ENCODE measurements at regions of chr13 and their contacts with region 1.

Region 1: GRCh38 chr13:112968908-112969691 is at the start of gene MCF2L:
- DNase-seq: peak; percentile 33 to 80 (median 78)
- ATAC-seq: peak; percentile 83
- H3K4me3 ChIP-seq: peak within 1 kb of the TSS; percentile 73
- H3K4me3 Mint-ChIP-seq: peak within 1 kb of the TSS; percentile 89 to 100 (median 94)
- H3K27ac ChIP-seq: peak within 1 kb of the TSS; percentile 62
- H3K27ac Mint-ChIP-seq: peak within 1 kb of the TSS; percentile 67 to 97 (median 94)
- H3K4me1 ChIP-seq: peaks cover 10 to 14% of the 10 kb centered on the region in 2 donors
- H3K4me1 Mint-ChIP-seq: peaks cover 9 to 57% (median 42%) of the 10 kb centered on the region in 7 donors
- H3K27me3 ChIP-seq: no peaks in the 10 kb centered on the region
- H3K27me3 Mint-ChIP-seq: peaks cover 0 to 35% (median 0%) of the 10 kb centered on the region in 5 donors
- total RNA-seq, gene MCF2L: 0.51 to 32.6 (median 21.9) TPM

Region 2: DNA sequence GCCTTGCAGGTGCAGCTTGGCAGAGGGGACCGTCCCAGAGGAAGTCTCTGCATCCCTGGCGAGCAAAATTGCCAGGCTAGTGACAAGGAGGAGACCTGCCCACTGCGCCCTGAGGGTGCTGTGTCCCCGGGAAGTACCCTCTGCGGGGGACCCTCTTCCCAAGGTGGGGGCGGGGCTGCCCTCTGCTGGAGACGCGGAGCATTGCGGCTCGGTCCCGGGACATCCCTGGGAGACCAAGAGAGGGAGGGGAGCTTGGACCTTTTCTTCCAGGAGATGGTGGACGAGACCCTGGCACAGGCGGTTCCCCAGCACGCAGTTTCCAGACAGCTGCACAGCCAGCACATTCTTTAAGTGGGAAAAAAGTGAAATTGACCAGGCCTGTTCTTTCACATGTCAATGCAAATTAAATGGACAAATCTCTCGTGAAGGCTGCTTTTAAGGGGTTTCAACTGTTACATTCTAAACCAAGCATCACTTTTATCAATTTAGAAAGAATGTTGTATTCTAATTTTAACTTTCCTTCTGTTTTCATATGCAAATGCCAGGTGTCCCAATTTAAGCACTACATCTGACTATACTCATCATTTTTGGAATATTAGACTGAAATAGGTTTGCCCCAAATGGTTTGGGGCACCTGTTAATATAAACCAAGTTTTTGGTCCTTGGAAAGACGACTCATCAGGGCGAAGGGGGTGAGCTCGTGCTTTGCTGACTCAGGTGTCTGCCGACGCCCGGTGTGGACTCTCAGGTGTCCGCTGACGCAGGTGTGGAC is 60.6 kb after region 1 on chr13:
- CTCF ChIA-PET with region 1: interaction called, 4 read pairs
- POLR2A ChIA-PET with region 1: no interaction called
- intact Hi-C with region 1: loop called in 1 of 2 experiments (anchors 1 kb)
- DNase-seq: peak; percentile 4 to 58 (median 33)
- ATAC-seq: peak; percentile 61
- H3K4me3 ChIP-seq: no peak overlapping the region
- H3K4me3 Mint-ChIP-seq: no peak overlapping the region
- H3K27ac ChIP-seq: no peak overlapping the region
- H3K27ac Mint-ChIP-seq: no peak overlapping the region
- H3K4me1 ChIP-seq: no peaks in the 10 kb centered on the region
- H3K4me1 Mint-ChIP-seq: peaks cover 0 to 7% (median 0%) of the 10 kb centered on the region in 7 donors
- H3K27me3 ChIP-seq: no peaks in the 10 kb centered on the region
- H3K27me3 Mint-ChIP-seq: no peaks in the 10 kb centered on the region

Region 3: DNA sequence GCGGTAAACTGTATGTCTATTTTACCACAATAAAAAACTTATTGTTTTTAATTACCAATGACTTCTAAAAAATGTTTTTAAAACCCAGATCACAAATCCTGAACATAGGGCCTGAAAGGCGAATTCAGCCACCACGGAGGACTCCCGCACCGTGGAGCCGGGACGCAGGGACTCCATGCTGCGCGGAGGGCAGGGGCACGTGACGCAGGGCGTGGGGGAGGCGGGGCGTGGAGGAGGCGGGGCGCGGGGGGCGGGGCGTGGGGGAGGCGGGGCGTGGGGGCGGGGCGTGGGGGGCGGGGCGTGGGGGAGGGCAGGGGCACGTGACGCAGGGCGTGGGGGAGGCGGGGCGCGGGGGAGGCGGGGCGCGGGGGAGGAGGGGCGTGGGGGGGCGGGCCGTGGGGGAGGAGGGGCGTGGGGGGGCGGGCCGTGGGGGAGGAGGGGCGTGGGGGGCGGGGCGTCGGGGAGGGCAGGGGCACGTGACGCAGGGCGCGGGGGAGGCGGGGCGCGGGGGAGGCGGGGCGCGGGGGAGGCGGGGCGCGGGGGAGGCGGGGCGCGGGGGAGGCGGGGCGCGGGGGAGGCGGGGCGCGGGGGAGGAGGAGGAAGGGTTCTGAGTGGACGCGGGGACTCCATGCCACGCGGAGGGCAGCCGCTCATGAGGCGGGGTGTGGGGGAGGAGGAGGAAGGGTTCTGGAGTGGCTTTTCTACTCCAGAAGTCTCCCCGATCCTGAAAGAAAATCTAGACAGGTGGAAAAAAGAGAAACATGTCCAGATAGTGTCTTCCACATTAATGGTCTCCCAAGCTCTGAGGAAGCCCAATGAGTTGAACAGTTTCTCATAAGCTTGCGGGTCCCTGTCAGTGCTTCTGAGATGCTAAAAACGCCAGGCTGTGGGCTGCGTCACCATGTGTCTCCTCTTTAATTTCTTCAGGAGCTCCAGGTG is 185.0 kb after region 1 on chr13:
- CTCF ChIA-PET with region 1: no interaction called
- POLR2A ChIA-PET with region 1: no interaction called
- intact Hi-C with region 1: loop called in 1 of 2 experiments (anchors 1 kb)
- DNase-seq: peak; percentile 55 to 76 (median 70)
- ATAC-seq: peak; percentile 89
- H3K4me3 ChIP-seq: peak overlapping the region; percentile 82
- H3K4me3 Mint-ChIP-seq: peak overlapping the region; percentile 78 to 99 (median 86)
- H3K27ac ChIP-seq: peak overlapping the region; percentile 68
- H3K27ac Mint-ChIP-seq: peak overlapping the region in 8 of 9 donors; percentile 84 to 96 (median 88)
- H3K4me1 ChIP-seq: peaks cover 15 to 16% of the 10 kb centered on the region in 2 donors
- H3K4me1 Mint-ChIP-seq: peaks cover 9 to 26% (median 21%) of the 10 kb centered on the region in 7 donors
- H3K27me3 ChIP-seq: no peaks in the 10 kb centered on the region
- H3K27me3 Mint-ChIP-seq: peaks cover 0 to 27% (median 7%) of the 10 kb centered on the region in 5 donors